ENCODE measurements at regions of chr5 and their contacts with region 1.

Region 1: GRCh38 chr5:56951946-56952691 is at the start of gene MIER3:
- DNase-seq: peak; percentile 50 to 86 (median 78)
- ATAC-seq: peak; percentile 92
- H3K4me3 ChIP-seq: peak within 1 kb of the TSS; percentile 66 to 69
- H3K4me3 Mint-ChIP-seq: peak within 1 kb of the TSS; percentile 95
- H3K27ac ChIP-seq: peak within 1 kb of the TSS; percentile 37 to 40
- H3K27ac Mint-ChIP-seq: peak within 1 kb of the TSS; percentile 87
- H3K4me1 ChIP-seq: peaks cover 16% of the 10 kb centered on the region
- H3K4me1 Mint-ChIP-seq: peaks cover 23% of the 10 kb centered on the region
- H3K27me3 ChIP-seq: no peaks in the 10 kb centered on the region
- H3K27me3 Mint-ChIP-seq: peaks cover 14% of the 10 kb centered on the region
- CTCF ChIP-seq: no peak
- total RNA-seq, gene MIER3: 29.3 to 39.2 TPM

Region 2: DNA sequence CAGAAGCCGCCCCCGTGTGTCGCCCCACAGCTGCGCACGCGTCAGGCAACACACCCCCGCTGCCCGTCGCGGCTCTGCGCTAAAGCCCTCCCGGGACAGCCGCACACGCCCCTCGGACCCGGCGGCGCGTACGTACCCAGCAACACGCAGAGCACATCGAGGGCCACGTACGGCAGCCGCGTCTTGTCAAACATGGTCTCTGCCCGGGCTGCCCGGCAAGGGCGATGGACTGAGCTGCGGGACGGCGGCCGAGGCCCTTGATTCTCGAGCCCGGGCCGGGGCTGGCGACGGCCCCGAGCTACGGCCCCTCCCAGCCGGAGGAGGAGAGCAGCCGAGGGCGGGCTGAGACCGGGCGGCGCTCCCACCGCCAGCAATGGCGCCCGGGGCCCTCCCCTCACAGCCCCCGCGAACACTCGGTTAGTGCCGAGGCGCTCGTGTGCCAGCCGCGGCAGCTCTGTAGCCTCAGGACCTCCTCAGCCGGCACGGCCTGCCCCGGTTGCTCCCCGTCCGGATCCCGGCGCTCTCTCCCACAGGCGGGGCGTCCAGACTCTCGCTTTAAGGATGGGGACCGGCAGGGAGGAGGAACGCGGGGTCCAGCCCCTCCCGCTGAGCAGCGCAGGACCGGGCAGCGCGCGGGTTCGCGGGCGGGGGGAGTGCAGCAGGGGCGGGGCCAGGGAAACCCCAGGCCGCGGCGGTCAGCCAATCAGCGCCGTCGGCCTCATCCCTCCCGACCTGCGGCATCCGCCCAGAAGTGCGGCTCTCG is 1417.5 kb before region 1 on chr5 and contains the start of gene PLPP1:
- CTCF ChIA-PET with region 1: no interaction called
- POLR2A ChIA-PET with region 1: no interaction called
- intact Hi-C with region 1: loop called in 1 of 2 experiments (anchors 10 kb)
- DNase-seq: peak; percentile 57 to 93 (median 79)
- ATAC-seq: peak; percentile 79
- H3K4me3 ChIP-seq: peak within 1 kb of the TSS; percentile 81 to 97
- H3K4me3 Mint-ChIP-seq: peak within 1 kb of the TSS; percentile 93
- H3K27ac ChIP-seq: peak within 1 kb of the TSS; percentile 81 to 87
- H3K27ac Mint-ChIP-seq: peak within 1 kb of the TSS; percentile 92
- H3K4me1 ChIP-seq: peaks cover 25% of the 10 kb centered on the region
- H3K4me1 Mint-ChIP-seq: peaks cover 37% of the 10 kb centered on the region
- H3K27me3 ChIP-seq: no peaks in the 10 kb centered on the region
- H3K27me3 Mint-ChIP-seq: no peaks in the 10 kb centered on the region
- CTCF ChIP-seq: no peak
- total RNA-seq, gene PLPP1: 5.8 to 5.9 TPM

Region 3: GRCh38 chr5:56909294-56910209 is 42.6 kb before region 1 on chr5 and contains the start of gene SETD9:
- CTCF ChIA-PET with region 1: interaction called, 4 read pairs
- POLR2A ChIA-PET with region 1: interaction called, 7 read pairs
- intact Hi-C with region 1: loop called (anchors 1 kb)
- DNase-seq: peak; percentile 67 to 94 (median 87)
- ATAC-seq: peak; percentile 82
- H3K4me3 ChIP-seq: peak within 1 kb of the TSS; percentile 88
- H3K4me3 Mint-ChIP-seq: peak within 1 kb of the TSS; percentile 89
- H3K27ac ChIP-seq: peak within 1 kb of the TSS; percentile 61 to 87
- H3K27ac Mint-ChIP-seq: peak within 1 kb of the TSS; percentile 88
- H3K4me1 ChIP-seq: peaks cover 8% of the 10 kb centered on the region
- H3K4me1 Mint-ChIP-seq: peaks cover 20% of the 10 kb centered on the region
- H3K27me3 ChIP-seq: no peaks in the 10 kb centered on the region
- H3K27me3 Mint-ChIP-seq: no peaks in the 10 kb centered on the region
- CTCF ChIP-seq: no peak
- total RNA-seq, gene SETD9: 2.5 to 2.9 TPM

Region 4: DNA sequence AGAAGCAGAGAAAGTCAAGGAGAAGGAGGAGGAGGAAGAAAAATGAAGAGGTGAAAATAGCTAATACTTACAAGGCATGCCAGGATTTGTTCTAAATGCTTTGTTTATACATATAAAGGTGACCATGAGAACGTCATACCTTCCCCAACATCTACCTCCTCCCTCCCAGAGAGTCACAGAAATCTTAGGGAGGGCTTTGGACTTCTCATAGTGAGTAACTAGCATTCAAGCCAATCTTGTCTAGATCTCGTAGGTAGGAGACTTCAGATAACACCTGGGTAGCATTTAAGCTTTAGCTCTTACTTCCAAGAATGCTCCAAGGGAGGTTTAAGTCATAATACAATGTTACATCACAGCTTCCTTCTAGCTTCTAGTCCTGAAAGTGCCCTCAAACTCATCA is 185.3 kb after region 1 on chr5:
- CTCF ChIA-PET with region 1: interaction called, 4 read pairs
- POLR2A ChIA-PET with region 1: no interaction called
- intact Hi-C with region 1: loop called in 1 of 2 experiments (anchors 2 kb)
- DNase-seq: peak in 1 of 9 experiments; percentile 2
- ATAC-seq: no peak
- H3K4me3 ChIP-seq: no peak overlapping the region
- H3K4me3 Mint-ChIP-seq: no peak overlapping the region
- H3K27ac ChIP-seq: no peak overlapping the region
- H3K27ac Mint-ChIP-seq: no peak overlapping the region
- H3K4me1 ChIP-seq: no peaks in the 10 kb centered on the region
- H3K4me1 Mint-ChIP-seq: no peaks in the 10 kb centered on the region
- H3K27me3 ChIP-seq: no peaks in the 10 kb centered on the region
- H3K27me3 Mint-ChIP-seq: no peaks in the 10 kb centered on the region
- CTCF ChIP-seq: no peak

Region 5: DNA sequence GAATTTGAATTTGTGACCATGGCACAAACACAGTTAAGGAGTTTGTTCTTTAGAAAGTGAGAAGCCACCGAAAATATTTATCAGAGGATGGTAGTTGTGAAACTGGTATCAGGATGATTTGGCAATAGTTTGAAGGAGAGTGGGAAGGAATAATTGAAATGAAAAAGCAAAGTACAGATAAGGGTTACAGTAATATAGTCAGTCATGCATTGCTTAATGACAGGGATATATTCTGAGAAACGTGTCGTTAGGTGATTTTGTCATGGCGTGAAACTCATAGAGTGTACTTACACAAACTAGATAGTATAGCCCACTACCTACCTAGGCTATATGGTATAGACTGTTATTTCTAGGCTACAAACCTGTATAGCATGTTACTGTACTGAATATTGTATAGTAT is 305.9 kb after region 1 on chr5:
- CTCF ChIA-PET with region 1: no interaction called
- POLR2A ChIA-PET with region 1: no interaction called
- intact Hi-C with region 1: no loop called
- DNase-seq: no peak
- ATAC-seq: no peak
- H3K4me3 ChIP-seq: no peak overlapping the region
- H3K4me3 Mint-ChIP-seq: no peak overlapping the region
- H3K27ac ChIP-seq: no peak overlapping the region
- H3K27ac Mint-ChIP-seq: no peak overlapping the region
- H3K4me1 ChIP-seq: no peaks in the 10 kb centered on the region
- H3K4me1 Mint-ChIP-seq: peaks cover 15% of the 10 kb centered on the region
- H3K27me3 ChIP-seq: no peaks in the 10 kb centered on the region
- H3K27me3 Mint-ChIP-seq: no peaks in the 10 kb centered on the region
- CTCF ChIP-seq: no peak

Measured in CD8-positive, alpha-beta T cell (primary cell).